GM13976 (cell line): ENCODE measurements at regions of chr6 and their contacts with region 1.

Region 1: GRCh38 chr6:132820629-132821381 is 6.4 kb downstream of the RPS12 start:
- DNase-seq: no peak
- CTCF ChIP-seq: no peak

Region 2: DNA sequence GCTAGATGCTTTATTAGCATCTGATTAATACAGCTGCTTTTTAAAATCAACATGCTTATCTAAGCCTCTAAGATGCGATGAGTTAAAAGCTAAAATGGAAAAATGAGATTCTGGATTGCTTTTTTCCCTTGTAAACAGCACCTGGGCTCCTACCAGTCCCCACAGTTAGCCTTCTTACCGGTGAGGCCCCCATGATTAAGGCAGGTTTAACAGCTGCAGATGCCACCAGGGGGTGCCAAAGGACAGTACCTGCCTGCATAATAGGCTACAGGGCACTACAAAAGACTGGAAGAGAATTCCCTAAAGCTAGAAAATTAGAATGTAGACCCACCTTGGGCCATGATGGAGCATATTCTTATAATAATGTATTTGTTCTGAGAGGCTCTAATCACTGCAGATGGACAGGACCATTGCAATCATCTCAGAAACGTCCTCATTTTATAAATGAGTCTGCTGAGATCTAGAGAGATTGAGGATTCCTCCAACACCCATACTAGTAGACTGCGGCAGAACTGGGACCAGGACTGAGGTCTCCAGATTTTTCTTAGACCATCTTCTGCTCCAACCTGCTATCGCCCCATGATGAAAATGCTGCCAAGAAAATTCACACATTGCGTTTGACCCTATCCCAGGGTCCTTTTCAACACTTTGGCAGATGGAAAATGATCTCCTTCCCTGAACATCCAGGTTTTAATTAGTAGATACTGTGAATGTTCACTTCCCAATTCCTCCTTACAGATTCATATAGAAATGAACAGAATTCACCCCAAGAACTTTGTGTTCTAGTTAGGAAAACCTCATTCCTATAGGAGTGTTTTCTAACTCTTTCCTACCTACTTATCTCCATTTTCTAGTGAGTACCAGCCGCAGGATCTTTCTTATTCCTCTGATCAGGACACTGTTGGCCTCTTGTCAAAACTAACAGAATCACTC is 142.4 kb after region 1 on chr6:
- in situ Hi-C with region 1: loop called (anchors 10 kb)
- DNase-seq: peak; percentile 23
- CTCF ChIP-seq: peak; percentile 71